OCI-LY7 (cell line): ENCODE measurements at regions of chr9 and their contacts with region 1.

Region 1: DNA sequence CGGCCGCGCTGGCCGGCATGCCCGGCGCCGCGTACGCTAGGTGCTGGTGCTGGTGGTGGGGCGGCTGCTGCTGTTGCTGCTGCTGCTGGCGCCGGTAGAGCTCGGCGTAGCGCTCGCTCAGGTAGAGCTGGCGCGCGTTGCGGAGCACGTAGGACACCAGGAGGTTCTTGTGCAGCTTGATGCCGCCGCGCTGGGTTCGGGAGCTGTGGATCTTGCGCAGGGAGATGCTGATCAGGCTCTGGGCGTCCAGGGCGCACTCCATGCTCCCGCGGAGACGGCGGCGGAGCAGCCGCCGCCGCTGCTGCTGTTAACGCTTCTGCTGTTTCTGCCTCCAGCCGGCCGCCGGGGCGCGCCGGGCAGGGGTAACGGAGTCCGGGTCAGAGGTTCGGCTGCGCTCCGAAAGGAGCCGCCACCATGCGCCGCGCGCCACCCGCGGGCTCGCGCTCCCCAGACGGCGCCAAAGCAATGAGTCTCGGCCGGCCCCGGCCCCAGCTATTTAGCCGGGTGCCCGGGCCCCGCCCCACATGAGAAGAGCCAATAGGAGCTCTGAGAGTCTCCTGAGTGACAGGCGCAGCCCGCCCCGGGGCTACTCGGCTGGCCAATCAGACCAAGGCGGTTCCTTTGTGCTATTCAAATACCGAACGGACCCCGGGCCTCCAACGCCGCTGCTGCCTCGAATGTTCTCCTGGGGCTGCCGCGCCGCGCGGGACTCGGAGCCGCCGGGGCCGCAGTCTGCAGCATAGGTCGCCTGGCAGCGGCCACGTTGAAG is at the start of gene IER5L:
- DNase-seq: peak; percentile 97
- H3K4me3 ChIP-seq: peak within 1 kb of the TSS; percentile 72
- H3K27ac ChIP-seq: peak within 1 kb of the TSS; percentile 44
- H3K4me1 ChIP-seq: peaks cover 35% of the 10 kb centered on the region
- CTCF ChIP-seq: peak; percentile 26; the same call in 1 of the 2 replicates
- total RNA-seq, gene IER5L: 16.9 and 21.2 TPM in 2 replicates

Region 2: GRCh38 chr9:128892317-128892921 is 285.6 kb before region 1 on chr9:
- CTCF ChIA-PET with region 1: no interaction called
- POLR2A ChIA-PET with region 1: no interaction called
- intact Hi-C with region 1: no loop called
- DNase-seq: no peak
- H3K4me3 ChIP-seq: no peak overlapping the region
- H3K27ac ChIP-seq: no peak overlapping the region
- H3K4me1 ChIP-seq: peaks cover 3% of the 10 kb centered on the region
- CTCF ChIP-seq: no peak

Region 3: DNA sequence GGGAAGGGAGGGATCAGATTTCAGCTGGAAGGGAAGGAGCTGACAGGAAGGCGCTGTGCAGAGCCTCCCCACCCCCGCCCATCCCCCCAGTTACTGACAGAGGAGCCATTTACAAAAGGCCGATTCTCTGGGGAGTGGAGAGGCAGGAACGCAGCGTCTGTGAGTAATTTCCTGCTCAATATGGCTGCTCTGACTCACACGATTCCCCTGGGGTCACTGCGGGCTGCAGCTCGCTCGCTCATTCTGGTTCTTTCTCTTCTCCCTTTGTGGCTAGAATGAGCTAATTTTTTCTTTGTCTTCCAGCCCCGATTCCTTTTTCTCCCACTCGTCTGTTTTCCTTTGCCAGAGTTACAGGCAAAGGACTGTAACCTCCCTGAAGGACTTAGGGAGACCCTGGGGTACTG is 38.0 kb before region 1 on chr9:
- CTCF ChIA-PET with region 1: interaction called, 8 read pairs
- POLR2A ChIA-PET with region 1: interaction called, 6 read pairs
- intact Hi-C with region 1: loop called (anchors 1 kb)
- DNase-seq: peak; percentile 96
- H3K4me3 ChIP-seq: peak overlapping the region; percentile 64
- H3K27ac ChIP-seq: peak overlapping the region; percentile 91
- H3K4me1 ChIP-seq: peaks cover 53% of the 10 kb centered on the region
- CTCF ChIP-seq: no peak

Region 4: GRCh38 chr9:129237195-129237611 is 59.2 kb after region 1 on chr9:
- CTCF ChIA-PET with region 1: interaction called, 4 read pairs
- POLR2A ChIA-PET with region 1: interaction called, 6 read pairs
- intact Hi-C with region 1: loop called (anchors 5 kb)
- DNase-seq: peak; percentile 41
- H3K4me3 ChIP-seq: peak overlapping the region; percentile 56
- H3K27ac ChIP-seq: peak overlapping the region; percentile 66
- H3K4me1 ChIP-seq: peaks cover 35% of the 10 kb centered on the region
- CTCF ChIP-seq: no peak

Region 5: GRCh38 chr9:129284373-129285291 is 106.7 kb after region 1 on chr9:
- CTCF ChIA-PET with region 1: no interaction called
- POLR2A ChIA-PET with region 1: no interaction called
- intact Hi-C with region 1: loop called (anchors 5 kb)
- DNase-seq: peak; percentile 66
- H3K4me3 ChIP-seq: no peak overlapping the region
- H3K27ac ChIP-seq: no peak overlapping the region
- H3K4me1 ChIP-seq: peaks cover 41% of the 10 kb centered on the region
- CTCF ChIP-seq: no peak

Region 6: DNA sequence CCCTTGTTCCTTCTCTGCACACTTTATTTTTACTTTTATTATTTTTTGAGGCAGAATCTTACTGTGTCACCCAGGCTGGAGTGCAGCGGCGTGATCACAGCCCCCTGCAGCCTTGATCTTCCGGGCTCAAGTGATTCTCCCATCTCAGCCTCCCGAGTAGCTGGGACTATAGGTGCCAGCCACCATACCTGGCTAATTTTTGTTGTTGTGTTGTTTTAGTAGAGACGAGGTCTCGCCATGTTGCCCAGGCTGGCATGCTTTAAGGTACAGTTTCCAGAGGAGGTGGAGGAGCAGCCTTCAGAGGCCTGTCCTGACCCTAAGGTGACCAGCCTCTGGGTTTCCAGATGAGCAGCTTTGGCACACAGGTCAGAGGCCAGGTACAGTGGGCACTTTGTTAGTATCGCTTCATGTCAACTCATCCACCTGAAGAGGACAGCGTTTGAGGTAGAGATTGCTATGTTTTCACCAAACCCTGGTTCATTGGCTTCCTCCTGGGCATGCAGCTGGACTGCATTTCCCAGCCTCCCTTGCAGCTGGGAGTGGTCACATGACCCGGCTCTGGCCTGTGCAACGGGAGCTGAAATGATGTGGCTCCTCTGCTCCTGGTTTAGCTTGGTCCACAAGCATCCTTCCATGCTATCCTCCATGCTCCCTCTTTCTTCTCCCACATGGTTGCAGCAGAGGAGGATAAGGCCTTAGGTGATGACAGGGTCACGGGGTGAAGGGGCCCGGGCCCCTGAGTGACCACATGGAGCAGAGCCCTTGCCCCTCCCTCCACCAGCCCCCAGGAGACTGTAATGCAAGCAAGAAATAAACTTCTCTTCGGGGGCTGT is 139.4 kb after region 1 on chr9:
- CTCF ChIA-PET with region 1: no interaction called
- POLR2A ChIA-PET with region 1: no interaction called
- intact Hi-C with region 1: no loop called
- DNase-seq: peak; percentile 22
- H3K4me3 ChIP-seq: no peak overlapping the region
- H3K27ac ChIP-seq: no peak overlapping the region
- H3K4me1 ChIP-seq: peaks cover 10% of the 10 kb centered on the region
- CTCF ChIP-seq: no peak

Region 7: GRCh38 chr9:129406278-129407225 is 228.6 kb after region 1 on chr9:
- CTCF ChIA-PET with region 1: no interaction called
- POLR2A ChIA-PET with region 1: no interaction called
- intact Hi-C with region 1: no loop called
- DNase-seq: no peak
- H3K4me3 ChIP-seq: no peak overlapping the region
- H3K27ac ChIP-seq: no peak overlapping the region
- H3K4me1 ChIP-seq: peaks cover 7% of the 10 kb centered on the region
- CTCF ChIP-seq: no peak

Region 8: DNA sequence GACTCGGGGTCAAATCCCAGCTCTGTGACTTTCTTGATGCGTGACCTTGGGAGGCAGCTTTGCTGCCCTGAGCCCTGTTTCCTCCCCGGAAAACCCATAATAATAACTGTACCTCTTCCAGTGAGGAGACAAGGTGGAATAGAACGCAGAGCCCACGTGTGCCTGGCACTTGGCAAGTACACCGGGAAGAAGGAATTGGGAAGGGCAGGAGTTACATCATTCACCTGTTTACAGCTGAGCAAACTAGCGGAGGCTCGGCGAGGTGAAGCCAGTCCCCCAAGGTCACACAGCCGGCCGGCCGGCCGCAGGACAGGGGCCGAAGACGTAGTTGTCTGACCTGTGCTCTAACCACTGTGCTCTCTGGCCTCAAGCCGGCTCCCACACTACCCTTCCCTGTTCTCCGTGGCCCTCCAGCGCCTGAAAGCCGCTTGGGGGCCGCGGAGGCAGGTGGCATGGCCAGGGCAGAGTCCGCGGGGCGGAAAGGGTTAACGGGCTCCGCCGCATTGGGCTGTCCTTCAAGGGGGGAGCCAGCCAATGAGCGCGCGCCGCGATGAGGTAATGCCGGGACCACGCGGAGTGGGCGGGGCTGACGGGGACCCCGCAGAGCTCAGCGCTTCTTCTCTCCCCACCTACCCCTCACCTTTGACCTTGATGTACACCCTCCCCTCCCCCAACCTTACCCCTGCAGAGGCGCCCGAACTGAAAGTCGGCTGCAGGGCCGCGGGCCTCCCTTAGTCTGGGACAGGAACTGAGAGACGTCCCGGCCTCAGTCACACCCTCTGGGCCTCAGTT is 317.8 kb after region 1 on chr9:
- CTCF ChIA-PET with region 1: no interaction called
- POLR2A ChIA-PET with region 1: no interaction called
- intact Hi-C with region 1: loop called (anchors 10 kb)
- DNase-seq: peak; percentile 31
- H3K4me3 ChIP-seq: peak overlapping the region; percentile 24
- H3K27ac ChIP-seq: no peak overlapping the region
- H3K4me1 ChIP-seq: peaks cover 8% of the 10 kb centered on the region
- CTCF ChIP-seq: no peak

Region 9: GRCh38 chr9:129610473-129611301 is 432.7 kb after region 1 on chr9:
- CTCF ChIA-PET with region 1: interaction called, 3 read pairs
- POLR2A ChIA-PET with region 1: no interaction called
- intact Hi-C with region 1: loop called (anchors 1 kb)
- DNase-seq: peak; percentile 80
- H3K4me3 ChIP-seq: peak overlapping the region; percentile 75
- H3K27ac ChIP-seq: no peak overlapping the region
- H3K4me1 ChIP-seq: peaks cover 25% of the 10 kb centered on the region
- CTCF ChIP-seq: peak; percentile 85

Region 10: GRCh38 chr9:129626079-129626624 is 448.2 kb after region 1 on chr9 and contains the start of gene NTMT1:
- CTCF ChIA-PET with region 1: no interaction called
- POLR2A ChIA-PET with region 1: interaction called, 3 read pairs
- intact Hi-C with region 1: loop called (anchors 5 kb)
- DNase-seq: peak; percentile 90
- H3K4me3 ChIP-seq: peak within 1 kb of the TSS; percentile 92
- H3K27ac ChIP-seq: peak within 1 kb of the TSS; percentile 73
- H3K4me1 ChIP-seq: peaks cover 44% of the 10 kb centered on the region
- CTCF ChIP-seq: no peak
- total RNA-seq, gene NTMT1: 46.6 and 51.9 TPM in 2 replicates